ENCODE measurements at regions of chr2 and their contacts with region 1.

Region 1: DNA sequence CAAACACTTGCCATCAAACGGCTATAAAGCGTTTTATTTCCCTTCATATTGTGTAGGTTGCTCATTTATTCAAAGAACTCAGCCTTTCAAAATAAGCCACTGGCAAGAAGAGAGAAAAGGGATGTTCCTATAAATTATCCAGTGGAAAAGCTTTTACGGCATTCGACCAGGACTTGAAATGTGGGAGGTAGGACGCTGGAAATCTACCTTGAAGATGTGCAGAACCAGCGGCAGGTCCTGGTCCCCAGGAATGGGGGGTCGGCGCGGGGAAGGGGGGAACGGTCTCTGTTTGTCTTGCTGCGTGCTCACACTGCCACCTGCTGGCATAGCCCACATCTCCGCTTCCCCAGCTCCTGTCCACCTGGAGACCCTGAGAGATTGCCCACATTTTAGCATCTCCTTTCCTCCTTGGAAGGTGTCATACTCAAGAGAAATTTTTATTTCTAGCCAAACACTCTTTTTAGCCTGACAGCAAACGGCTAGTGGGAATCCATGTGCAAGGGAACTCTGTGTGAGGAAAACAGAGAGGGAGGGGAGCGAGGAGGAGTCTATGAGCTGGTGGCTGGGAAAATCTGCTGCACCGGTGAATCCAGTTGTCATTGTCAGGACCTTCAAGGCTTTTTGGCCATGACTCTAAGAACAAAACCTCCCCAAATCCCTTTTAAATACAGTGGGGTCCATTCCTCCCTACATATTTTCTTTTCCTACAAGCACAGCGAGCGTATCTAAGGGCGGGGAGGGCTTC is 349.0 kb upstream of the PKDCC start:
- DNase-seq: peak; percentile 79
- H3K4me3 ChIP-seq: no peak overlapping the region
- H3K27ac ChIP-seq: no peak overlapping the region
- H3K4me1 ChIP-seq: peaks cover 11% of the 10 kb centered on the region
- H3K27me3 ChIP-seq: no peaks in the 10 kb centered on the region
- CTCF ChIP-seq: peak; percentile 74 to 86 (median 78)
- POLR2A ChIP-seq: no peak

Region 2: DNA sequence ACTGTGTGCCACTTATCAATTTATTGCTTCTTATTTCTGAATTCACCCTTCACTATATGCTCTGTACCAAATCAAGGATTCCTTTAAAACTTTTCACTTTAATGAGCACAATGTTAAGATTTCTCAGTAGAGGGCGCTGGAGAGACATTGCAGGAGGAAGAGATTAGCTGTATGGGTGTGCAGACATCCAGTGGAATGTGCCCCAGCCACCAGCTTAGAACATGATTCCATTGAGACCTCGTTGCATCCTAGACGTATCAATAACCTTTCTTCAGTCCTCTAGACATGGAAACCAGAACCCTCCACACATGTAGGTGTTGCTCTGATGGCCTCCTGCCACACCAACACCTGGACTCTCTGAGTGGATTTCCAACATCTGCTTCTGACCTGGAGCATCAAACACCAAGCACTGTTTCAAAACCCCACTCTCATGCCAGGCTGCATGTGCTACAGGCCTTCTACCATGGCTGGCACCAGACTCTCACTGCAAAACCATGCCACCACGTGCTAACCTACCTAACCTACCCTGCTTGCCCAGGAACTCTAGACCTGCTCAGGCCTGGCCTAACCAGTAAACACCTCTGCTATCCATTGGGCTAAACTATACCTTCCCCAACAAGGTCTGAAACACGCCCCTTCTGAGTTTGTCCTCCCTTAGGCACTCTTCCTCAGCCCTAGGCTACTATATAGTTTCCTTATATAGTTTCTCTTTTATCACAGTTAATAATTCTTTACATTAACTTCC is 284.2 kb before region 1 on chr2:
- intact Hi-C with region 1: loop called (anchors 10 kb)
- DNase-seq: peak; percentile 56
- H3K4me3 ChIP-seq: no peak overlapping the region
- H3K27ac ChIP-seq: no peak overlapping the region
- H3K4me1 ChIP-seq: no peaks in the 10 kb centered on the region
- H3K27me3 ChIP-seq: no peaks in the 10 kb centered on the region
- CTCF ChIP-seq: peak; percentile 22 to 54 (median 46)
- POLR2A ChIP-seq: no peak

Measured in testis (tissue), 5 donors.